MCF 10A (cell line): ENCODE measurements at regions of chr11 and their contacts with region 1.

Region 1: DNA sequence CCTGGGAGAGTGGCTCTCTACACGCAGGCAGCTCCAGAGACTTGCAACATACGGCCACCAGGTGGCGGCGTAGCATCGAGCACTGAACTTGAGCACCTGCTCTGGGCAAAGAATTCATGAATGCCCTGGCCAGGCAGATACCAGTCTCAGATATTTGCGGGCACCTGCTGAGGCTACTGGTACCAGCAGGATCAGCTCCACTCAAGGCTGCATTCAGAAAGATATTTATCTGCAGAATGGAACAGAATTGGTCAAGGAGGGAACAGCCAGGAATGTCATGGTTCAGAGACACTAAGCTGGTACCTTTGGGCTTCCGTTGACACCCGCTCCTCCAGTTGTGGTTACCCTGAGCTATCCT is 10.8 kb upstream of the CCDC86 start:
- DNase-seq: peak; percentile 83
- H3K4me3 Mint-ChIP-seq: peak overlapping the region; percentile 35
- H3K27ac Mint-ChIP-seq: no peak overlapping the region
- H3K4me1 Mint-ChIP-seq: peaks cover 21% of the 10 kb centered on the region
- H3K27me3 Mint-ChIP-seq: peaks cover 8% of the 10 kb centered on the region
- CTCF ChIP-seq: peak; percentile 92

Region 2: DNA sequence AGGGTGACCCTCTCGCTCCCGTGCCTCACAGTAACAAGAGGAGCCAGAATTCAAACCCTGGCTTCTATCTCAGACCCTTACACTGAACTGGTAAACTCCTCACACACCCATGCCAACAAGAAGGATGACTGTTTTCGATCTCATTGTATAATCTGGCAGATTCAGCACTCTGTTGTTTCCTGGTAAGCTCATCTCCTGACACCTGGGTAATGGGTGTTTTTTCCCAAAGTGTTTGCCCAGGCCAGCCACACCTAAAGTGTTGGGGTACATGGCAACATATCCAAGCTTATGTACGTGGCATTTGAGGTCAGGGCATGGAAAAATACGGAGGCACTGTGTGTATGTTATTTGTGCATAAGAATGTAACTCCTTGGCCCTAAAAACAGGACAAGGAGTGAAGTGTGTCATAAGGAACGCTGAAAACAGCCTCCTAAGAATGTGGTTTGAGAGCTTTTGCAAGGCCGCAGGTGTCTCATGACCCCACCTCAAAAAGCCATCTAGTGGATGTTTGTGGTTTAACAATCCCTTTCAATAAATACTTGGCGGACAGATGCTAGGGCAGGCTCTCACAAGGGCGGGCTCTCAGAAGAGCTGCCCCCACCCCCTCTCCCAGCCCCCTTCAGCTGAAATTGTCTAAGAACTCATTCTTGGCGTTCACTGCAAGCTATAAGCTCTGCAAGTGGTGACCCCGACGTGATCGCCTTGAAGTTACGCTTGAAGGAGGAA is 74.7 kb before region 1 on chr11 and contains the start of gene MS4A15:
- CTCF ChIA-PET with region 1: no interaction called
- POLR2A ChIA-PET with region 1: no interaction called
- intact Hi-C with region 1: no loop called
- DNase-seq: peak; percentile 52
- H3K4me3 Mint-ChIP-seq: no peak within 1 kb of the TSS
- H3K27ac Mint-ChIP-seq: no peak within 1 kb of the TSS
- H3K4me1 Mint-ChIP-seq: no peaks in the 10 kb centered on the region
- H3K27me3 Mint-ChIP-seq: peaks cover 53% of the 10 kb centered on the region
- CTCF ChIP-seq: peak; percentile 36
- total RNA-seq, gene MS4A15: not detected in 2 replicates

Region 3: DNA sequence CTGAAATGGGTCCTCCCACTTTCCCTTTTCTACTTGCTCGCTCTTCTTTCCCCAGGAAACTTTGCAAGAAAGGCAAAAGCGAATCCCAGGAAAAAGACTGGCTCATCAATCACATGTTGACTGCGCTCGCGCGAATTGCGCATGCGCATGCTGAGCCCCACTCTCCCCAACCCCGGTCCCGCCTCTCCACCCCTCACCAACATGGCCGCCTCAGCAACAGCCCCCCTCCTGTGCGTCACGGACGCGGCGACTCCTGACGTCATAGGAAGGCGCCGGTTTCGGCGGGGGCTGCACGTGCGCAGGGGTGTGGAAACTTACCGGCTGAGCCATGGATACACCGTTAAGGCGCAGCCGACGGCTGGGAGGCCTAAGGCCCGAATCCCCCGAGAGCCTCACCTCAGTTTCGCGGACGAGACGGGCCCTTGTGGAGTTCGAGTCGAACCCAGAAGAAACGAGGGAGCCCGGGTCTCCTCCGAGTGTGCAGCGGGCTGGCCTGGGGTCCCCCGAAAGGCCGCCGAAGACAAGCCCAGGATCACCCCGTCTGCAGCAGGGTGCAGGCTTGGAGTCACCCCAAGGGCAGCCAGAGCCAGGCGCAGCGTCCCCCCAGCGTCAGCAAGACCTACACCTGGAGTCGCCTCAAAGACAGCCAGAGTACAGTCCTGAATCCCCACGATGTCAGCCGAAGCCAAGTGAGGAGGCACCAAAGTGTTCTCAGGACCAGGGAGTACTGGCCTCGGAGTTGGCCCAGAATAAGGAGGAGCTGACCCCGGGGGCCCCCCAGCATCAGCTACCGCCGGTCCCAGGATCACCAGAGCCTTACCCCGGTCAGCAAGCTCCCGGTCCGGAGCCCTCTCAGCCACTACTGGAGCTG is 10.9 kb after region 1 on chr11 and contains the start of gene CCDC86:
- CTCF ChIA-PET with region 1: interaction called, 36 read pairs
- POLR2A ChIA-PET with region 1: interaction called, 9 read pairs
- intact Hi-C with region 1: no loop called
- DNase-seq: peak; percentile 94
- H3K4me3 Mint-ChIP-seq: peak within 1 kb of the TSS; percentile 91
- H3K27ac Mint-ChIP-seq: peak within 1 kb of the TSS; percentile 92
- H3K4me1 Mint-ChIP-seq: peaks cover 42% of the 10 kb centered on the region
- H3K27me3 Mint-ChIP-seq: no peaks in the 10 kb centered on the region
- CTCF ChIP-seq: no peak
- total RNA-seq, gene CCDC86: 37.5 and 57.8 TPM in 2 replicates

Region 4: GRCh38 chr11:60899046-60899936 is 68.2 kb after region 1 on chr11:
- CTCF ChIA-PET with region 1: interaction called, 163 read pairs
- POLR2A ChIA-PET with region 1: interaction called, 16 read pairs
- intact Hi-C with region 1: loop called (anchors 1 kb)
- DNase-seq: peak; percentile 64
- H3K4me3 Mint-ChIP-seq: no peak overlapping the region
- H3K27ac Mint-ChIP-seq: no peak overlapping the region
- H3K4me1 Mint-ChIP-seq: peaks cover 5% of the 10 kb centered on the region
- H3K27me3 Mint-ChIP-seq: no peaks in the 10 kb centered on the region
- CTCF ChIP-seq: peak; percentile 92

Region 5: DNA sequence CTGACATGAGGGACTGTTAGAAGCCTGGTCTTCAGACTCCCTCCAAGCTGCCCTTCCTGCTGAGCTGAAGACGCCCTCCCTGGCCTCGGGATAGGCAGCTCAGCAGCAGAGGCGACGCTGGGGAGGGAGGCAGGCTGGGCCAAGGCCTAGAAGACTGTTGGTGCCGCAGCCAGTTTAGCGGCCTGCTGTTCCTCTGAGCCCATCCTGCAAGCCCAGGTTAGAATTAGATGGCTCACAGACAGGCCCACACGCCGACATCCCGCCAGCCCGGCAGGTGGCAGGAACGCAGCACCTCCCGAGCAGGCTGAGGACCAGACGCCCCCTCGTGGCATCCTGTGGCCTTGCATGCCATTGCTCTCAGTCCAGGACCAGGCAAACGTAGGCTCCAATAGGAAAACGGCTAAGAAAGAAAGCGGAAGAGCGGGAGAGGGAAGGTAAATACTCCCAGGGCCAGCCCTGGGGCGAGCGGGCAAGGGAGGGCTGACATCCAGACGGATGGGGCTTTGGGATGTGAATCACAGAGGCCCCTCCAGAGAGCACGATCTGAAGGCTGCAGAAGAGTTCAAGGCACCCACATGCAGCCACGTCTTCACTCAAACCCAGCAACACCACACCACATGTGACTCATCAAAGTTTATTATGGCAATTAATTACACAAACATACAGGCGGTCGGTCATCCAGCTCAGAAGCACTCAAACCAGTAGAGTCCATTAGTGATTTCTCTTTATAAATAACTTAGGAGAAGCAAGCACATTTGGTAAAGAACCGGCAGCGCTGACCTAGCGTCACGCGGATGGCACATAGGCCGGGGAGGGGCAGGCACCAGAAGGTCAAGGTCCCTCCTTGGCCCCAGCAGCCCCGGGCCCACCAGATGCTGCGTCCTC is 298.8 kb after region 1 on chr11:
- CTCF ChIA-PET with region 1: interaction called, 22 read pairs
- POLR2A ChIA-PET with region 1: interaction called, 5 read pairs
- intact Hi-C with region 1: loop called (anchors 1 kb)
- DNase-seq: peak; percentile 83
- H3K4me3 Mint-ChIP-seq: peak overlapping the region; percentile 54
- H3K27ac Mint-ChIP-seq: peak overlapping the region; percentile 23
- H3K4me1 Mint-ChIP-seq: peaks cover 6% of the 10 kb centered on the region
- H3K27me3 Mint-ChIP-seq: no peaks in the 10 kb centered on the region
- CTCF ChIP-seq: peak; percentile 100

Region 6: GRCh38 chr11:61187505-61188130 is 356.5 kb after region 1 on chr11:
- CTCF ChIA-PET with region 1: interaction called, 52 read pairs
- POLR2A ChIA-PET with region 1: no interaction called
- intact Hi-C with region 1: loop called (anchors 1 kb)
- DNase-seq: peak; percentile 73
- H3K4me3 Mint-ChIP-seq: no peak overlapping the region
- H3K27ac Mint-ChIP-seq: no peak overlapping the region
- H3K4me1 Mint-ChIP-seq: no peaks in the 10 kb centered on the region
- H3K27me3 Mint-ChIP-seq: no peaks in the 10 kb centered on the region
- CTCF ChIP-seq: peak; percentile 88